Psoas muscle (tissue), 8 donors: ENCODE measurements at regions of chr5 and their contacts with region 1.

Region 1: DNA sequence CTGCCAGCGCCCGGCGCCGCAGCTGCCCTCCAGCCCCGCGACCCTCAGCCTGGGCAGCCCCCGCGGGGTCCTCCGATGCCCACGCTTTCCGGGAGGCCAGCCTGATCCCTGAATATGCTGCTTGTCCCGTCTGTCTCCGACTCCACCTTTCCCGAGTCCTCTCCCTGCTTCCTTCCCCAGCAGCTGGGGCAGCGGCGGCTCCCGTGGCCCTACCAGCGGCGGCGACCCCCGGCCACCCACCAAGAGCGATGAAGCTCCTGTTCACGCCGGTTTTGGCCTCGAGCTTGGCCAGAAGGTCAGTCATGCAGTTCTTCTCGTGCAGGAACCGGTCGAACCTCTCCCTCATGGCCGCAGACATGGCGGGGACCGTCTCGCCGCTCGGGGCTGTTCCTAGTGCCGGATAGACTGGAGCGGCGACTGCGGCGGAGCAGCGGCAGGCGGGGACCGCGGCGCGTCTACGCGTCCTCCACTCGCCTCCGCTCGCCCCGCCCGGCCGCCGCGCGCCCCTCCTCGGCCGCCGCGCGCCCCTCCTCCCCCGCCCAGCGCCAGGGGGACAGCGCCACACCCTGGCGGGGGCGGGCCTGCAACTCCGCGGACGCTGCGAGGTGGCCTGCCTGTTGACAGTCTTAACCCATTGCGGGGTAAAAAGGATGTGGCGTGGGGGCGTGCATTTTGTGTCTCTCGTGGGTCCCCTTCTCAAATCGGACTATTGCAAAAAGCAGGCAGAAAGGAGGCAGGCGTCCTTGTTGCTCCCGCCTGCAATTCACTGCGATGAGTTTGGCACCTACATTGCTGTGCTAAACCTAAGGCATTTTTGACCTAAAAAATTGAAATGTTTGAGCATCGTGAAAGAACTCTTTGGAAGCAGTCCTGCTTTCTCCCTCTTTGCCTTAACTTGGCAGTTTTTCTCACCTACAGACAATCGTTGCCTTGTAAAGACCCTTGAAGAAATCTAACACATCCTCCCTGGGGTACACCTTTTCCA is at the start of gene REEP5:
- DNase-seq: peak; percentile 90 to 93
- ATAC-seq: peak; percentile 92 to 95 (median 94)
- H3K4me3 ChIP-seq: peak within 1 kb of the TSS; percentile 99
- H3K27ac ChIP-seq: peak within 1 kb of the TSS; percentile 99
- H3K4me1 ChIP-seq: peaks cover 29% of the 10 kb centered on the region
- H3K27me3 ChIP-seq: no peaks in the 10 kb centered on the region
- CTCF ChIP-seq: peak; percentile 88
- total RNA-seq, gene REEP5: 66.1 to 83.6 (median 80.2) TPM

Region 2: GRCh38 chr5:112860929-112861637 is 61.0 kb before region 1 on chr5 and contains the start of gene SRP19:
- intact Hi-C with region 1: loop called (anchors 5 kb)
- DNase-seq: peak; percentile 94 to 97
- ATAC-seq: peak; percentile 96 to 98 (median 97)
- H3K4me3 ChIP-seq: peak within 1 kb of the TSS; percentile 82
- H3K27ac ChIP-seq: peak within 1 kb of the TSS; percentile 77
- H3K4me1 ChIP-seq: peaks cover 23% of the 10 kb centered on the region
- H3K27me3 ChIP-seq: peaks cover 0 to 1% (median 0%) of the 10 kb centered on the region in 3 donors
- CTCF ChIP-seq: no peak
- total RNA-seq, gene SRP19: 32.9 to 44.5 (median 38.3) TPM

Region 3: GRCh38 chr5:112958093-112959088 is 36.3 kb after region 1 on chr5:
- intact Hi-C with region 1: loop called in 1 of 2 experiments (anchors 5 kb)
- DNase-seq: peak; percentile 76 to 90
- ATAC-seq: peak; percentile 92 to 94 (median 93)
- H3K4me3 ChIP-seq: peak overlapping the region; percentile 19
- H3K27ac ChIP-seq: peak overlapping the region; percentile 62
- H3K4me1 ChIP-seq: peaks cover 31% of the 10 kb centered on the region
- H3K27me3 ChIP-seq: no peaks in the 10 kb centered on the region
- CTCF ChIP-seq: no peak